ENCODE measurements at regions of chr13 and their contacts with region 1.

Region 1: GRCh38 chr13:75870397-75870903 is 234.3 kb downstream of the LMO7 start:
- DNase-seq: no peak
- ATAC-seq: no peak; the same call in 1 of the 2 replicates
- H3K4me3 Mint-ChIP-seq: no peak overlapping the region
- H3K27ac Mint-ChIP-seq: peak overlapping the region; percentile 72; the same call in 1 of the 2 replicates
- H3K4me1 Mint-ChIP-seq: peaks cover 48% of the 10 kb centered on the region
- H3K27me3 Mint-ChIP-seq: no peaks in the 10 kb centered on the region
- CTCF ChIP-seq: peak; percentile 68

Region 2: GRCh38 chr13:75687150-75687763 is 183.2 kb before region 1 on chr13:
- CTCF ChIA-PET with region 1: interaction called, 13 read pairs
- POLR2A ChIA-PET with region 1: no interaction called
- DNase-seq: no peak
- ATAC-seq: peak; percentile 50
- H3K4me3 Mint-ChIP-seq: no peak overlapping the region
- H3K27ac Mint-ChIP-seq: no peak overlapping the region
- H3K4me1 Mint-ChIP-seq: peaks cover 34% of the 10 kb centered on the region
- H3K27me3 Mint-ChIP-seq: no peaks in the 10 kb centered on the region
- CTCF ChIP-seq: peak; percentile 17; the same call in 1 of the 2 replicates

Region 3: DNA sequence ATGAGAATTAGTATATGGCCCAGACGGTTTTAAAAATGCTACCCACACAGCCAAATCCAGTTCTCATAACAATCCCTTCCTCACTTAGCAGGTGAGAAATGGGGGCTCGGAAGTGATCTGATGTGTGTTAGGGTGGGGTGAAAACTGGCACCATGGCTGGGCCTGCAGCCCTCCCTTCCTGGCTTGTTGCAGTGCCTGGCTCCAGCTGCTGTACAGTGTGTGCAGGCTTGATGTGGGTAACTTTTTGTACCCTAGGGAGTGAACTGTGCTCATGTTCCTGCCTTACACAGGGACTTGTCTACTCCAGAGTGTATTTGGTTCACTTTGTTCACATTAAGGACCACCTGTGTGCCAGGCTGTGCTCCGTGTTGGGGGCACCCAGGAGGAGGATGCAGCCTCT is 57.1 kb before region 1 on chr13:
- CTCF ChIA-PET with region 1: no interaction called
- POLR2A ChIA-PET with region 1: no interaction called
- DNase-seq: no peak
- ATAC-seq: no peak
- H3K4me3 Mint-ChIP-seq: no peak overlapping the region
- H3K27ac Mint-ChIP-seq: no peak overlapping the region
- H3K4me1 Mint-ChIP-seq: peaks cover 12% of the 10 kb centered on the region
- H3K27me3 Mint-ChIP-seq: no peaks in the 10 kb centered on the region
- CTCF ChIP-seq: no peak

Measured in WTC11 (cell line).